ENCODE measurements at regions of chr3 and their contacts with region 1.

Region 1: DNA sequence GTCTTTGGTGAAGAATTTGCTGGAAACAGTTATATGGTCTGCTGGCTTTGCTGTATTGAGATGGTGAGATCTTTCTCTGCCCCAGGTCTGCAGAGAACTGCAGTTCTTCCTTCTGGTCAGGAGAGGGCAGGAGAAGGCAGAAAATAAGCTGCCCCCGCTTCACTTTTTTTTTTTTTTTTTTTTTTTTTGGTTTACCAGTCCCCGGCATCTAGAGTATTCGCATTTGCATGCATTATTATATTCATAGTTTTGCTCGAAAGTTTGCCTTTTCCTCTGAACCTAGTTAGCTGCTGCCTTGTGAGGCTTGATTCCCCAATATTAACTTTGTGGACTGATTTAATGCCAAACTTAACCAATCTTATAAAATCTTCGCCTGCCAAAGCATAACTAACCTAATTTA is 10.6 kb upstream of the PARL start:
- DNase-seq: peak; percentile 37
- H3K4me3 ChIP-seq: no peak overlapping the region
- H3K27ac ChIP-seq: no peak overlapping the region
- H3K4me1 ChIP-seq: no peaks in the 10 kb centered on the region
- H3K27me3 ChIP-seq: no peaks in the 10 kb centered on the region
- CTCF ChIP-seq: peak; percentile 41 to 73 (median 61)
- POLR2A ChIP-seq: no peak

Region 2: DNA sequence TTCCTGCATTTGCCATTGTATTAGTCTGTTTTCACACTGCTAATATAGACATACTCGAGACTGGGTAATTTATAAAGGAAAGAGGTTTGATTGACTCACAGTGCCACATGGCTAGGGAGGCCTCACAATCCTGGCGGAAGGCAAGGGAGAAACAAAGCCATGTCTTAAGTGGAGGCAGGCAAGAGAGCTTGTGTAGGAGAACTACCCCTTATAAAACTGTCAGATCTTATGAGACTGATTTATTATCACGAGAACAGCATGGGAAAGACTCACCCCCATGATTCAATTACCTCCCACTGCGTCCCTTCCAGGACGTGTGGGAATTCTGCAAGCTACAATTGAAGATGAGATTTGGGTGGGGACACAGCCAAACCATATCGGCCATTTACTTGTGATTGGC is 169.9 kb before region 1 on chr3:
- intact Hi-C with region 1: no loop called
- DNase-seq: no peak
- H3K4me3 ChIP-seq: no peak overlapping the region
- H3K27ac ChIP-seq: no peak overlapping the region
- H3K4me1 ChIP-seq: no peaks in the 10 kb centered on the region
- H3K27me3 ChIP-seq: no peaks in the 10 kb centered on the region
- CTCF ChIP-seq: no peak
- POLR2A ChIP-seq: no peak

Region 3: GRCh38 chr3:183930086-183930485 is 34.8 kb after region 1 on chr3:
- intact Hi-C with region 1: no loop called
- DNase-seq: no peak
- H3K4me3 ChIP-seq: no peak overlapping the region
- H3K27ac ChIP-seq: no peak overlapping the region
- H3K4me1 ChIP-seq: no peaks in the 10 kb centered on the region
- H3K27me3 ChIP-seq: no peaks in the 10 kb centered on the region
- CTCF ChIP-seq: no peak
- POLR2A ChIP-seq: no peak

Region 4: GRCh38 chr3:184017672-184018423 is 122.6 kb after region 1 on chr3 and contains the start of gene ABCC5:
- intact Hi-C with region 1: loop called (anchors 10 kb)
- DNase-seq: peak; percentile 96
- H3K4me3 ChIP-seq: peak within 1 kb of the TSS; percentile 86 to 99
- H3K27ac ChIP-seq: peak within 1 kb of the TSS; percentile 8 to 81
- H3K4me1 ChIP-seq: peaks cover 15% of the 10 kb centered on the region
- H3K27me3 ChIP-seq: no peaks in the 10 kb centered on the region
- CTCF ChIP-seq: peak in 1 of 3 experiments; percentile 56
- POLR2A ChIP-seq: no peak
- total RNA-seq, gene ABCC5: 61.5 to 77.9 TPM

Region 5: GRCh38 chr3:184249412-184250166 is 354.3 kb after region 1 on chr3 and contains the start of gene EEF1AKMT4:
- intact Hi-C with region 1: loop called (anchors 10 kb)
- DNase-seq: peak; percentile 98
- H3K4me3 ChIP-seq: peak within 1 kb of the TSS; percentile 81 to 84
- H3K27ac ChIP-seq: peak within 1 kb of the TSS; percentile 73 to 81
- H3K4me1 ChIP-seq: peaks cover 10% of the 10 kb centered on the region
- H3K27me3 ChIP-seq: no peaks in the 10 kb centered on the region
- CTCF ChIP-seq: peak; percentile 44 to 58 (median 47)
- POLR2A ChIP-seq: no peak
- total RNA-seq, gene EEF1AKMT4: 10.2 to 15.0 TPM